ENCODE measurements at regions of chr4 and their contacts with region 1.

Region 1: DNA sequence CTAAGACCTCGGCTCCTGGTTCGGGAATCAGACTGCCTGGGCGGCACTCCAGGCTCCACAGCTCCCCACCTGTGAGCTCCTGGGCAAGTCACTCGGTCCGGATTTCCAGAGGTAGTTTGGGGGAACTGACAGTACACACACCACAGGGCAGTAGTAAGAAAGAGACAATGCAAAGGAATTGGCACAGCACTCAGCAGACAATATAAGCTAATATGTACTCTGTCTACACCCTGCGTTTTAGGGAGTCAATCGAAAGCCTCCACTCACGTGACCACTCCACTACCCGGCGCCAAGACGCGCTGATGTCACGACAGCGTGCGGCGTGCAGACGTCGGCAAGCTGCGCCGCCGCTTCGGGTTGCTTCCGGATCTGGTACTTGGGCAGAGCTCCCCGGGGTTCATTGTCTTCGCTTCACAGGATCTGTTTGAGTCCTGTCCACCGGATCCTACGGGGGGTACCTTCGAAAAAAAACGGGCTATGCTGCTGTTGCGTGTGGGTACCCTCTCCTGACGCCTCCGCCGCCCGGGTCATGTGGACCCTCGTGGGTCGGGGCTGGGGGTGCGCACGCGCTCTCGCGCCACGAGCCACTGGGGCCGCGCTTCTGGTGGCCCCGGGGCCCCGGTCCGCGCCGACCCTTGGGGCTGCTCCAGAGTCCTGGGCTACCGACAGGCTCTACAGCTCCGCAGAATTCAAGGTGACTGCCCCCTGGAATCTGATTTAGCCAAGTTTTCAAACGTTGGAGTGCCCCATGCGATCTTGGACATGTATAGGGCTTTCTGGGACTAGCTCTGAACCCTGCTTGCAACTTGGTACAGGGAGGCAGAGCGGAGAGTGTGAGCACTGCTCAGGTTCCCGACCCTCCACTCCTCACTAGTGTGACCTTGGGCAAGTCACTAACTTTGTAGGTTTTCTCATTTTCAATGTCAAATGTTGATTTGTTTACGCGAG is at the start of gene GUF1:
- DNase-seq: peak; percentile 91
- H3K4me3 Mint-ChIP-seq: peak within 1 kb of the TSS; percentile 96
- H3K27ac Mint-ChIP-seq: peak within 1 kb of the TSS; percentile 95
- H3K4me1 Mint-ChIP-seq: peaks cover 12% of the 10 kb centered on the region
- H3K27me3 Mint-ChIP-seq: no peaks in the 10 kb centered on the region
- CTCF ChIP-seq: no peak
- total RNA-seq, gene GUF1: 50.2 and 51.7 TPM in 2 replicates

Region 2: GRCh38 chr4:44716597-44716996 is 38.2 kb after region 1 on chr4:
- CTCF ChIA-PET with region 1: no interaction called
- POLR2A ChIA-PET with region 1: interaction called, 25 read pairs
- intact Hi-C with region 1: no loop called
- DNase-seq: no peak
- H3K4me3 Mint-ChIP-seq: no peak overlapping the region
- H3K27ac Mint-ChIP-seq: no peak overlapping the region
- H3K4me1 Mint-ChIP-seq: peaks cover 8% of the 10 kb centered on the region
- H3K27me3 Mint-ChIP-seq: no peaks in the 10 kb centered on the region
- CTCF ChIP-seq: no peak

Region 3: DNA sequence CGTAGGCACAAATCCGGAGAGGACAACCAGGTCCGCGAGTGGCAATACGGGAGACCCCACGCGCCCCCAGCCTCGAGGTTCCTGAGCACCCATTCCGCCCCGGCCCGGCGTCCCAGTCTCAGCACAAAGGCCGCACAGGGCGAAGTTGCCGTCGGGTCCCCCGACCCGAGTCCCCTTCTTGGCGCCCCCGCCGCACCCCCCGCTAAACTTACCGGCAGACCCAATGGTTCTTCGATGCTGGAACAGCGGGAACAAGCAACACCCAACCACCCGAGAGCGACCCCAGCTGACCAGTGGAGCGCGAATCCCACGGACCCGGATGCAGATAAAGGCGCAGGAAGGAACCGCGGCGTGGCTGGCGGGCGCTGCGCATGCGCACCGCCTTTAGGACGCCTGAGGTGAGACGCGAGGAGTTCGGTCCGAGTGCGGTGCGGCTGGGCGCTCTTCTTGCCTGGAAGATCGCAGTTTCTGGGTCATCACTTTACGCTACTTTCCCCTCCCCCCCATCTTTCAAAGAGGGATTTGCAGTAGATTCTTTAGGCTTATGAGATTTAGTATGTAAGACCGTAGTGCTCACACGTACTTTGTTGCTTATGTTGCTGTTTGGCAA is 48.0 kb after region 1 on chr4 and contains the start of gene GNPDA2:
- CTCF ChIA-PET with region 1: interaction called, 3 read pairs
- POLR2A ChIA-PET with region 1: interaction called, 42 read pairs
- intact Hi-C with region 1: no loop called
- DNase-seq: peak; percentile 84
- H3K4me3 Mint-ChIP-seq: peak within 1 kb of the TSS; percentile 74
- H3K27ac Mint-ChIP-seq: peak within 1 kb of the TSS; percentile 77
- H3K4me1 Mint-ChIP-seq: peaks cover 6% of the 10 kb centered on the region
- H3K27me3 Mint-ChIP-seq: no peaks in the 10 kb centered on the region
- CTCF ChIP-seq: no peak
- total RNA-seq, gene GNPDA2: 16.8 and 19.3 TPM in 2 replicates